ENCODE measurements at regions of chr16 and their contacts with region 1.

Region 1: GRCh38 chr16:48556913-48557351 is 53.0 kb downstream of the N4BP1 start:
- DNase-seq: peak; percentile 52
- H3K4me3 Mint-ChIP-seq: no peak overlapping the region
- H3K27ac Mint-ChIP-seq: peak overlapping the region; percentile 63
- H3K4me1 Mint-ChIP-seq: peaks cover 80% of the 10 kb centered on the region
- H3K27me3 Mint-ChIP-seq: no peaks in the 10 kb centered on the region

Region 2: GRCh38 chr16:48231727-48232492 is 325.0 kb before region 1 on chr16:
- CTCF ChIA-PET with region 1: no interaction called
- POLR2A ChIA-PET with region 1: no interaction called
- intact Hi-C with region 1: loop called (anchors 5 kb)
- DNase-seq: peak; percentile 70
- H3K4me3 Mint-ChIP-seq: peak overlapping the region; percentile 6
- H3K27ac Mint-ChIP-seq: peak overlapping the region; percentile 58
- H3K4me1 Mint-ChIP-seq: peaks cover 20% of the 10 kb centered on the region
- H3K27me3 Mint-ChIP-seq: no peaks in the 10 kb centered on the region

Region 3: GRCh38 chr16:48393485-48394354 is 163.2 kb before region 1 on chr16:
- CTCF ChIA-PET with region 1: no interaction called
- POLR2A ChIA-PET with region 1: no interaction called
- intact Hi-C with region 1: no loop called
- DNase-seq: peak; percentile 43
- H3K4me3 Mint-ChIP-seq: no peak overlapping the region
- H3K27ac Mint-ChIP-seq: peak overlapping the region; percentile 68
- H3K4me1 Mint-ChIP-seq: peaks cover 4% of the 10 kb centered on the region
- H3K27me3 Mint-ChIP-seq: no peaks in the 10 kb centered on the region

Region 4: GRCh38 chr16:48452977-48453760 is 103.8 kb before region 1 on chr16:
- CTCF ChIA-PET with region 1: no interaction called
- POLR2A ChIA-PET with region 1: no interaction called
- intact Hi-C with region 1: loop called (anchors 10 kb)
- DNase-seq: no peak
- H3K4me3 Mint-ChIP-seq: no peak overlapping the region
- H3K27ac Mint-ChIP-seq: no peak overlapping the region
- H3K4me1 Mint-ChIP-seq: peaks cover 7% of the 10 kb centered on the region
- H3K27me3 Mint-ChIP-seq: peaks cover 16% of the 10 kb centered on the region

Region 5: GRCh38 chr16:48479955-48480354 is 77.0 kb before region 1 on chr16:
- CTCF ChIA-PET with region 1: no interaction called
- POLR2A ChIA-PET with region 1: no interaction called
- intact Hi-C with region 1: no loop called
- DNase-seq: no peak
- H3K4me3 Mint-ChIP-seq: no peak overlapping the region
- H3K27ac Mint-ChIP-seq: no peak overlapping the region
- H3K4me1 Mint-ChIP-seq: peaks cover 4% of the 10 kb centered on the region
- H3K27me3 Mint-ChIP-seq: peaks cover 21% of the 10 kb centered on the region

Region 6: GRCh38 chr16:48576927-48577326 is 20.0 kb after region 1 on chr16:
- CTCF ChIA-PET with region 1: no interaction called
- POLR2A ChIA-PET with region 1: no interaction called
- intact Hi-C with region 1: loop called (anchors 1 kb)
- DNase-seq: peak; percentile 55
- H3K4me3 Mint-ChIP-seq: no peak overlapping the region
- H3K27ac Mint-ChIP-seq: peak overlapping the region; percentile 76
- H3K4me1 Mint-ChIP-seq: peaks cover 56% of the 10 kb centered on the region
- H3K27me3 Mint-ChIP-seq: no peaks in the 10 kb centered on the region

Region 7: GRCh38 chr16:48879223-48880122 is 322.5 kb after region 1 on chr16:
- CTCF ChIA-PET with region 1: no interaction called
- POLR2A ChIA-PET with region 1: no interaction called
- intact Hi-C with region 1: no loop called
- DNase-seq: no peak
- H3K4me3 Mint-ChIP-seq: no peak overlapping the region
- H3K27ac Mint-ChIP-seq: no peak overlapping the region
- H3K4me1 Mint-ChIP-seq: no peaks in the 10 kb centered on the region
- H3K27me3 Mint-ChIP-seq: no peaks in the 10 kb centered on the region

Measured in activated CD4-positive, alpha-beta memory T cell treated with anti-CD3 and anti-CD28 coated beads for 36 hours (primary cell).